Posterior cingulate gyrus (tissue), 11 donors: ENCODE measurements at regions of chr20 and their contacts with region 1.

Region 1: GRCh38 chr20:38893565-38894090 is 32.6 kb upstream of the FAM83D start:
- DNase-seq: peak; percentile 65 to 98 (median 86)

Region 2: DNA sequence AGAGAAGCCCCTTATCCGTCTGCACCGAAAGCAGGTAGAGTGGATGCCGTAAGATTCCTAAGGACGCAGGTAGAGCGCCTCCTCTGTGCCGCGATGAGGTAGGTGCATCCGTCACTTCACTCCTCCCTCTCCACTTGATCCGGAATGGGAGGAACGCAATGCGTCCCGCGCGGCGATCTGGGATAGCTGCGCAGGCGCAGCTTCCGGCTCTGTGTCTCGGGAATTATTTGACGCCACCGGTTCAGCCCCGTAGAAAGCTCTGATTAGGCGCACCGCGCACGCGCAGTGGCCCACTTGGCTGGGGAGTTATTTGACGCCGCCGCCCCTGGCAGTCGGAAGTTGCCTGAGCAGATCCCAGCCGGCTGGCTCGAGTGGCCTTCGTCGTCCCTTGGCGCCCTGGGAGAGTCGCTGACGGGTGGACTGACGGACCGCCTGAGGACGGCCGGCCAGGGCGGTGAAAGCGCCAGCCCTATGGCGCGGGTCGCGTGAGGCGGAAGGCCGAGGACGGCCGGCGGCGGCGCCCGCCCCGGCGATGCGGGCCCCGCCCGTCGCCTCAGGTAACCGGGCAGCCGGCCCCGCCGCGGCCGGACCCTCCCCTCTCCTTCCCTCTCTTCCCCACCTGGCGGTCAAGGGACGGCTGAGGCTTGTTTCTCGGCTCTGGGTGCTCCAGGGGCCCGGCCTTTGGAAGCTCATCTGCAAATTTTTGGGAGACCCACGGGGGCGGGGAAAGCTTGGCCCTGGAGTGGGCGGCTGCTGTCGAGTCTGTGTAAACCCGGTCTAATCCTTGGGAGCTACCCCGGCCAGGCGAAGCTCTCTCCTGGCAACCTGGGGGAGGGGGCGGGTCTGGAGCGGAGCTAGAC is 420.9 kb before region 1 on chr20 and contains the start of gene RALGAPB:
- intact Hi-C with region 1: no loop called
- DNase-seq: peak; percentile 95 to 99 (median 97)

Region 3: GRCh38 chr20:38757145-38757775 is 136.4 kb before region 1 on chr20:
- intact Hi-C with region 1: loop called (anchors 5 kb)
- DNase-seq: no peak

Region 4: DNA sequence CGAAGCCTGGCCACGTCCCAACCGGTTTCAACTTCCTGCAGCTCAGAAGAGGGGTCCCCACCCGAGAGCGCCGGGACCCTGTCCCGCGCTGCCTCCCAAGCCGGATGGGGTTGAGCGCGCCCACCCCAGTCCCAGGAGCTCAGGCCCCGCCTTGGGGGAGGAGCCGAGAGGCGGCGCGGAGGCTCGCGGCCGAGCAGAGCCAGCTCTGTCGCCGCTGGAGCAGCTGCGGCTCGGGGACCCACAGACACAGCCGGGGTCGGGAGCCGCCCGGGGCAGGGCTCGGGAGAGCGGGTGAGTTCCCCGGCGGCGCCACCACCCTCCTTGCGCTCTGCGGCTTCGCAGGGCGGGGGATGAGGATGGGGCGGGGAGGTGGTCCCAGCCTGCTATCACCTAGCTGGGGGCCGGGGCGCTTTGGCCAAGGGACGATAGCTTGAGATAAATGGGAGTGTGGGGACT is 88.1 kb before region 1 on chr20 and contains the start of gene PPP1R16B:
- intact Hi-C with region 1: loop called (anchors 5 kb)
- DNase-seq: peak; percentile 66 to 98 (median 79)